HEK293 (cell line): ENCODE measurements at regions of chr20 and their contacts with region 1.

Region 1: DNA sequence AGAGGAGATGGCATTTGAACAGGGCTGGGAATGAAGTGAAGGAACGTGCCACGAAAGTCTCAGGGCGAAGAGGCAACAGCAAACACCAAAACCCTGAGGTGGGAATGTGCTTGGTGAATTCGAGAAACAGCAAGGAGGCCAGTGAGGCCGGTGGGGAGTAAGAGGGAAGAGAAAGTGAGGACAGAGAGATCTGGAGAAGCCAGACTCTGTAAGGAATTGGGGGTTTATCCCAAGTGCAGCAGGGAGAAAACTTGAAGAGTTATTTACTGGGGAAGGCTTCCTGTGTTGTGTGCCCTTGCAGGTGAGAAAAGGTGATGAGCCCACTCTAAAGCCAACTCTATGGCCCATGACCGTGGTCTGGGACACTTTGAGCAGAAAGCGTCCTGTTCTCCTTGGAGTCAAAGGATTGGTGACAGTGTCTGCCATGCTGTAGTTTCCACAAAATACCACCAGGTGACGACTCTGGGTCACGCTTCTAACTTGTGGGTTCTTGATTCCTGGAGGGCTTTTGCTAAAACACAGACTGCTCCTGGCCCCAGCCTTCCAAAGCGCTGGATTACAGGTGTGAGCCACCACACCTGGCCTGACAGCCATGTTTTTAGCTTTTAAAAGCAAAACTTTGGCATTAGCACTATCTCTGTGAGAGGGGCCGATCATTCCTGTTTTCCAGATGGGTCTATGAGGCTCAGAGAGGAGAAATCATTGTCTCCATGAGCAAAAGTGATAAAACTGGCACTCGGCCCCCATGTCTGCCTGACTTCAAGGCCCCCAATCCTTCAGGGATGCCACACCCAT is 18.0 kb upstream of the CSNK2A1 start:
- H3K4me3 ChIP-seq: no peak overlapping the region
- H3K27ac ChIP-seq: no peak overlapping the region
- H3K4me1 ChIP-seq: no peaks in the 10 kb centered on the region
- CTCF ChIP-seq: peak; percentile 83

Region 2: DNA sequence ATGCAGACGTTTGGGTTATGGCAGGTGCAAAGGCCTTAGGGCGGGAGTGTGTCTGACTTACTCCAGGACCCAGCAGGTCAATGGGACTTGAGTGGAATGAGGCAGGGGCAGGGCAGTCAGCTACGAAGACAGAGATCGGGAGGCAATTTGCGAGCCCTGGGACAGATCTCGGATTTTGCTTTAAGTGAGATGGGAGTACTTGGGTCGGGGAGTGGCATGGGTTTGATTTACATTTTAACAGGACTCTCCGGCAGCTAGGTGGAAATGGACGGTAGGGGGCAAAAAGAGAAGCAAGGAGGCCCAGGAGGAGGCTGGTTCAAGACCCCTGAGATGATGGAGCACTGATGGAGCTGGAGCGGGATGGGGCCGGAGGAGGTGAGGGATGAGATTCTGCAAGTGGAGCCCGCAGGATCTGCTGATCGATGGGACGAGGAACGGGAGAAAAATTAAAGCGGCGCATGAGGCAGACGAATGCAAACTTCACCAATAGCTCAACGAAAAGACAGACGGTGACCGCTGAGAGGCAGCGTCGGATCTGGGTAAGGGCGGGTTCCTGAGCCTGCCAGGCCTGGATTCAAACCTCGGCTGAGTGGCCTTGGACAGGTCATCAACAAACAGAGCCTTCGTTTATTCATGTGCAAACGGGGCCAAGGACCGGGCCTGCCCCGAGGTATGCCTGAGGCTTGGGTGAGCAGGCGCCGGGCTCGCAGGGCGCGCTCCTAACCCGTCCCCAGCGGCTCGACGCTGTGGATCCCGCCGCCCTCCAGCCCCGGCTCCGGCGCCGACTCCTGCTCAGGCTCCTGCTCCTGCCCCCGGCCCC is 154.3 kb before region 1 on chr20:
- CTCF ChIA-PET with region 1: no interaction called
- POLR2A ChIA-PET with region 1: no interaction called
- H3K4me3 ChIP-seq: peak overlapping the region; percentile 34
- H3K27ac ChIP-seq: peak overlapping the region; percentile 76
- H3K4me1 ChIP-seq: peaks cover 6% of the 10 kb centered on the region
- CTCF ChIP-seq: peak; percentile 93

Region 3: GRCh38 chr20:571754-572441 is 10.3 kb after region 1 on chr20:
- CTCF ChIA-PET with region 1: interaction called, 15 read pairs
- POLR2A ChIA-PET with region 1: no interaction called
- H3K4me3 ChIP-seq: no peak overlapping the region
- H3K27ac ChIP-seq: no peak overlapping the region
- H3K4me1 ChIP-seq: no peaks in the 10 kb centered on the region
- CTCF ChIP-seq: no peak

Region 4: DNA sequence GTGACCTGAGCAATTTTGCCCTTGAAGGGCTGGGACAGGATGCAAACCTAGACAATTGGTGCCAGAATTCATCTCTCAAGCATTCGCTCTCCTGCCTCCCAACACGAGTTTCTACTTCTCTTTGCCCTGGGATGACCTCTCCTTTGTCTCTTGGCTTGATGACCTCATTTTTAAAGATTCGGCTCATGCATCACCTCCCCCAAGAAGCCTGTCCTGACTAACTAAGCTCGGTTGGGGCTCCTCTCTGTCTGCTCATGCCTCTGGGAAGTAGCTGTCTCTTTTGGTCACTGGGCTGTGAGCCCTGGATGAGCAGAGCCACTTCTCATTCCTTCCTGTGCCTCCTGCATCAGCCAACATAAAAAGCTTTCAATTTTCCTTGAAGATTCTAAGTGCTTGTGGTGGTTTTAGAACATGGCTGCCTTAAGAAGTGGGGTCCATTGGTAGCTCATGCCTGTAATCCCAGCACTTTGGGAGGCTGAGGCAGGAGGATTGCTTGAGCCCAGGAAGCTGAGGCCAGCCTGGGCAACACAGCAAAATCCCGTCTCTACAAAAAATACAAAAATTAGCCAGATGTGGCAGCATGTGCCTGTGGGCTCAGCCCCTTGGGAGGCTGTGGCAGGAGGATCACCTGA is 59.6 kb after region 1 on chr20:
- CTCF ChIA-PET with region 1: interaction called, 22 read pairs
- POLR2A ChIA-PET with region 1: no interaction called
- H3K4me3 ChIP-seq: no peak overlapping the region
- H3K27ac ChIP-seq: no peak overlapping the region
- H3K4me1 ChIP-seq: peaks cover 2% of the 10 kb centered on the region
- CTCF ChIP-seq: no peak

Region 5: DNA sequence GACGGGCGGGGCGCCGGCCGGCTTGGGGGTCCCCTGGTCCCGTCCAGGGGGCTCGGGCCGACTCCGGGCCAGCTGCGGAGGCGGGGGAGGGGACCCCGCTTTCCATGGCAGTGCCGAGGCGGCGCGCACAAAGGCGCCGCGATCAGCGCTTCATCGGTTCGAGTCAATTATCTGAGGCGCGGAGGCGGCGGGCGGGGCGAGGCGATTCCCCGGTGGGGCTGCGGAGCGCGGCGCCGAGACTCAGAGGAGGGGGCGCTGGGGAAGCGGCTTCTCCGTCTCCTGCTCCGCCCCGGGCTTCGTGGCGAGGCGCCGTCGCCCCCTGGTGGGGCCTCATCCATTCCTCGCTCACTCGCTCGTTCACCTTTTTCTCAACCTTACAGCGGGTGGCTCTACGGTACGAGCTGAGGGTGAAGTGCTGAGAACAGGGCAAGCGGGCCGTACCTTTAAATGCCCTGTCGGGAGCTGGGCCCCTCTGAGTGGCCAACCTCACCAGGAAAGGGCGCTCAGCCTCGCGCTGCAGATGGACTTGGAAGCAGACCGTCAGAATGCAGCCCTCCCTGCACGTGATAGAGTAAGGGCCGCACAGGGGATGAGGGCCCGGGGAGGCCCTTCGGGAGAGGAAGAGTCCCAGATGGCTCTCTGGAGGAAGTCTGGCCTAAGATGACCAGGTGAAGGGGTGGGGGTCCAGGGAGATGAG is 166.8 kb after region 1 on chr20:
- CTCF ChIA-PET with region 1: interaction called, 11 read pairs
- POLR2A ChIA-PET with region 1: no interaction called
- H3K4me3 ChIP-seq: peak overlapping the region; percentile 30
- H3K27ac ChIP-seq: no peak overlapping the region
- H3K4me1 ChIP-seq: no peaks in the 10 kb centered on the region
- CTCF ChIP-seq: peak; percentile 96